Left cardiac atrium (tissue), 4 donors: ENCODE measurements at regions of chr2 and their contacts with region 1.

Region 1: GRCh38 chr2:168773719-168774521 is 28.5 kb upstream of the NOSTRIN start:
- DNase-seq: peak; percentile 62
- ATAC-seq: peak; percentile 78 to 87

Region 2: GRCh38 chr2:168849610-168850009 is 75.7 kb after region 1 on chr2:
- intact Hi-C with region 1: loop called in 1 of 2 experiments (anchors 5 kb)
- DNase-seq: peak; percentile 29
- ATAC-seq: peak; percentile 72 to 79

Region 3: GRCh38 chr2:168920504-168921157 is 146.7 kb after region 1 on chr2:
- intact Hi-C with region 1: loop called (anchors 5 to 10 kb)
- DNase-seq: no peak
- ATAC-seq: no peak

Region 4: GRCh38 chr2:169069341-169069740 is 295.4 kb after region 1 on chr2 and contains the start of gene DHRS9:
- intact Hi-C with region 1: no loop called
- DNase-seq: no peak
- ATAC-seq: peak in 1 of 2 donors; percentile 55
- total RNA-seq, gene DHRS9: 47.6 to 76.9 TPM